Activated CD4-positive, alpha-beta memory T cell treated with anti-CD3 and anti-CD28 coated beads for 36 hours (primary cell): ENCODE measurements at regions of chr7 and their contacts with region 1.

Region 1: DNA sequence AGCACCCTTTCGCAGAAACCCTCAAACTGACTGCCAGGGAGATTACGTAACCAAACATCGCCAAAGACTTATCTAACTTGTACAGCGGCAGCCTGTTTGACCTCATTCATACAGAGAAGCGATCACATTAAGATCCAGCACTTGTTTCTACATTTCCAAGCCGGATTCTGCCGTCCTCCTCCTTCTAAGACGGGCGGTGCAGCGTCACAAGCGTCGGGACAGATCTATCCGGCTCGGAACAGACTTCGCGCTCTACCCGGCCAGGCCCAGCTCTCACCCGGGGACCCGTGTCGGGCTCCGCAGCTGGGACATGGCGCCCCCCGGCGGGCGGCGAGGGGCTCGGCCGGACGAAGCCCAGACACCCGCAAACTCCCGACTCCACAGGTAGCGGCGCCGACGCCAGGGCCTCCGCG is 373 bp downstream of the H2AZ2 start:
- DNase-seq: peak; percentile 91
- H3K4me3 Mint-ChIP-seq: peak overlapping the region; percentile 93
- H3K27ac Mint-ChIP-seq: peak overlapping the region; percentile 95
- H3K4me1 Mint-ChIP-seq: peaks cover 37% of the 10 kb centered on the region
- H3K27me3 Mint-ChIP-seq: peaks cover 2% of the 10 kb centered on the region

Region 2: GRCh38 chr7:44490351-44491200 is 356.9 kb before region 1 on chr7 and contains the start of gene NUDCD3:
- CTCF ChIA-PET with region 1: no interaction called
- POLR2A ChIA-PET with region 1: no interaction called
- intact Hi-C with region 1: loop called (anchors 5 kb)
- DNase-seq: peak; percentile 89
- H3K4me3 Mint-ChIP-seq: peak within 1 kb of the TSS; percentile 87
- H3K27ac Mint-ChIP-seq: peak within 1 kb of the TSS; percentile 96
- H3K4me1 Mint-ChIP-seq: peaks cover 40% of the 10 kb centered on the region
- H3K27me3 Mint-ChIP-seq: no peaks in the 10 kb centered on the region
- total RNA-seq, gene NUDCD3: 88.9 to 92.4 TPM

Region 3: GRCh38 chr7:44606450-44607254 is 240.9 kb before region 1 on chr7 and contains the start of gene OGDH:
- CTCF ChIA-PET with region 1: no interaction called
- POLR2A ChIA-PET with region 1: interaction called, 12 read pairs
- intact Hi-C with region 1: loop called (anchors 1 kb)
- DNase-seq: peak; percentile 100
- H3K4me3 Mint-ChIP-seq: peak within 1 kb of the TSS; percentile 82
- H3K27ac Mint-ChIP-seq: peak within 1 kb of the TSS; percentile 98
- H3K4me1 Mint-ChIP-seq: peaks cover 36% of the 10 kb centered on the region
- H3K27me3 Mint-ChIP-seq: no peaks in the 10 kb centered on the region
- total RNA-seq, gene OGDH: 103 to 105 TPM

Region 4: DNA sequence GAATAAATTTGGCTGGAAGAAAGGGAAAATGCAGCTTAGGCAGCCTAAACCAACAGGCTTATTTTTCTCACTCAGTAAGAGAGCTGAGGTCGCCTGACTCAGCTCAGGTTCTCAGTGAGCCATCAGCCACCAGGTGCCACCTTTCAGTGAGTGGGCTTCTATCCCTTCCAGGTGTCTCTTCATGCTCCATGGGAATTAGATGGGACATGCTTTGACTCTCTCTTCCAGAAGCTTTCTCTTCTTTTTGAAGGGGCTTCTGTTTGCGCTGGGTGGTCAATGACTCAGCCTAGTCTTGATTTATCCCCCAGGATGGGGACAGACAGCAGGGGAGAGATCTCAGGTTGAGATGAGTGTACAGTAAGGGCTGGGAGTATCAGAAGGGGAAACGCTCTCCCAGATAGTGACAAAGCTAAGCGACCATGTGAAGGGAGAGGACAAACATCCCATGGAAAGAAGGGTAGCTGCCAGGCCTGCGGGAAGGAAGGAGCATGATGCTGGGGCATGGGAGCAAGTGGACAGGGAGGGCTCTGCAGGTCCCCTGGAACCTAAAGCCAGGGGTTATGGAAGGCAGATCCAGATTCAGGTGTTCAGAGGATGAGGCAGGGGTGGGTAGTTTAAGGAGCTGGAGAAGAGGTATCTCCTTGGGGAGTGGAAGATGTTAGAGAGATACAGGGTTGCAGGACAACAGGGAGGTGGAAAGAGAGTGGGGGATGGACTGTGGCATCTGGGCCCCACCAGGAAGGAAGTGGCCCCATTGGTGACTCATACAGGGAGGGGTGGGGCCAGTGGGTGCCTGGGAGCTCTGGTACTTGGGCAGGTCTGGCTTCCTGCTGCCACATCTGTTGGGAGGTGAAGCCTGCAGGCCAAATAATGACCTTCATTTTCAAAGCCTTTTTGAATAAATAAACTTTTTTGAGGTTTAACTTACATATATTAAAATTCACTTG is 208.6 kb before region 1 on chr7:
- CTCF ChIA-PET with region 1: interaction called, 4 read pairs
- POLR2A ChIA-PET with region 1: interaction called, 14 read pairs
- intact Hi-C with region 1: loop called (anchors 1 kb)
- DNase-seq: peak; percentile 93
- H3K4me3 Mint-ChIP-seq: peak overlapping the region; percentile 67
- H3K27ac Mint-ChIP-seq: peak overlapping the region; percentile 100
- H3K4me1 Mint-ChIP-seq: peaks cover 80% of the 10 kb centered on the region
- H3K27me3 Mint-ChIP-seq: no peaks in the 10 kb centered on the region

Region 5: DNA sequence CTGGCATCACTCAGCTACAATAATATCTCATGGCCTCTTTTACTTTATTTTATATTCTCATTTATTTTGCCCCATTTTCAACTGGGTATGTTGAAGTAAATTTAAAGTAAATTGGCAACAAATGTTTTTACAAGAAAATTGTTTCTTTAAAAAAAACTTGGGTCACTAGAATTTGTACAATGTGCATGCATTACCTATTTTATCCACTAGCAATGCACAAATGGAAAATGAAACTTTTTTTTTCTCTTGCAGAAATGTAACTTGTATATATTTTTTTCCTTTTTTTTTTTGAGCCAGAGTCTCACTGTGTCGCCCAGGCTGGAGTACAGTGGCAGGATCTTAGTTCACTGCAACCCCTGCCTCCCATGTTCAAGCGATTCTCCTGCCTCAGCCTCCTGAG is 10.6 kb after region 1 on chr7:
- CTCF ChIA-PET with region 1: interaction called, 30 read pairs
- POLR2A ChIA-PET with region 1: interaction called, 11 read pairs
- intact Hi-C with region 1: loop called (anchors 1 kb)
- DNase-seq: no peak
- H3K4me3 Mint-ChIP-seq: no peak overlapping the region
- H3K27ac Mint-ChIP-seq: no peak overlapping the region
- H3K4me1 Mint-ChIP-seq: peaks cover 14% of the 10 kb centered on the region
- H3K27me3 Mint-ChIP-seq: no peaks in the 10 kb centered on the region

Region 6: GRCh38 chr7:44980393-44981034 is 133.0 kb after region 1 on chr7:
- CTCF ChIA-PET with region 1: interaction called, 3 read pairs
- POLR2A ChIA-PET with region 1: interaction called, 9 read pairs
- intact Hi-C with region 1: loop called (anchors 1 kb)
- DNase-seq: peak; percentile 94
- H3K4me3 Mint-ChIP-seq: peak overlapping the region; percentile 97
- H3K27ac Mint-ChIP-seq: peak overlapping the region; percentile 100
- H3K4me1 Mint-ChIP-seq: peaks cover 67% of the 10 kb centered on the region
- H3K27me3 Mint-ChIP-seq: no peaks in the 10 kb centered on the region